H1 (cell line): ENCODE measurements at regions of chr11 and their contacts with region 1.

Region 1: DNA sequence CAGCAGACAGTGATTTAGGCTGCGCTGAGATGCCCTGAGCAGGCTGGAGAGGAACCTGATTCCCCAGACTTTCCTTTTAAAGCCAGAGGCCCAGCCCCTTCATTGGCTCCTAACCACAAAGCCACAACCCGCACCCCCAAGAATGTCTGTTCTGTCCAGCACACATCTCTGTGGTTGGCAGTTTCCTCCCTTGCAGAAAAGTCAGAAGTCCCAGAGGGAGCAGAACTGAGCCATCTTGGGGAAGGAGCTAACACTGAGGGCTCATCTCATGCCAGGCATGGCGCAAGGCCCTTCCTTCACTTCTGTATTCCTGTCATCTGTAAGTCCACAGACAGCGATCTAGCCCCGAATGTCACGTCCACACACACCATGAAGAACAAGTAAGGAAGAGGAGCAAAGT is 97.1 kb upstream of the SYT13 start:
- DNase-seq: no peak
- H3K4me3 ChIP-seq: no peak overlapping the region
- H3K27ac ChIP-seq: no peak overlapping the region
- H3K4me1 ChIP-seq: peaks cover 0 to 2% (median 0%) of the 10 kb centered on the region in 4 experiments; a peak in 2 of 7 replicates
- H3K27me3 ChIP-seq: no peaks in the 10 kb centered on the region; a peak in 1 of 7 replicates
- CTCF ChIP-seq: no peak
- EP300 ChIP-seq: no peak
- POLR2A ChIP-seq: no peak
- RAD21 ChIP-seq: no peak

Region 2: GRCh38 chr11:45252134-45252855 is 130.9 kb before region 1 on chr11:
- CTCF ChIA-PET with region 1: no interaction called
- POLR2A ChIA-PET with region 1: no interaction called
- DNase-seq: peak; percentile 54 to 96
- H3K4me3 ChIP-seq: no peak overlapping the region
- H3K27ac ChIP-seq: no peak overlapping the region
- H3K4me1 ChIP-seq: no peaks in the 10 kb centered on the region; a peak in 1 of 7 replicates
- H3K27me3 ChIP-seq: no peaks in the 10 kb centered on the region
- CTCF ChIP-seq: peak; percentile 90 to 95 (median 92)
- EP300 ChIP-seq: no peak; a peak in 1 of 3 replicates
- POLR2A ChIP-seq: no peak
- RAD21 ChIP-seq: peak; percentile 83 to 86

Region 3: DNA sequence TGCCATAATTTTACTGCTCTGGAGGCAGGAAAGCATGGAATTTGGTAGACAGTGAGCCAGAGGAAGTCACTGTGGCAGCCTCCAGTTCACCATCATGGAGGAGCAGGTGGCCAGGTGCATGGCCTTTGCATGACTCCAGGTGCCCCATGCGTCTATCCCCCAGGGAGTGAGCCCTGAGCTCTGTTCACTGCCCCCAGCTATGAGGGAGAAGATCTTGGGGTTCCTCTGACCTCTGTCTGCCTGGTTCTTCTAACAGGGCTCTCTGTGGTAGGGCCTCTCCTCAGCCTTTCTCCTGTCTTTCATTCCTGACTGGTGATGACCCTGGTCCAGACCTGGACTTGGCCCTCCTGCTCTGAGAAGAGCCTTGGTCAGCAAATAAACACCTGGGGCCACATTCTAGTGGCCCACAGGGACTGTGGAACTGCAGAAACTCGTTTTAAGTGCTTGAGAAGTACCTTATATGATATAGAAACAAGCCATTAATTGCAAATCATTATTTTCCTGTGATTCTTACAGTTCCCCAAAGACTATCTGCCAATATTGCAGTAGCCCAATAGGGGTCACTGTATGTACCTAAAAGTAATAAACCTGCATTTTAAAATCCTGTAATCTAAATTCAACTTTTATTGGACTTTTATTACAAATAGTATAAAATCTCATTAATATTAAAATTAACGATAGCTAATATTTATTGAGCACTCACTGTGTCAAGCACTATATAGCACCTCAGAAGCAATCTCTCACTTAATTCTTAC is 22.9 kb after region 1 on chr11:
- CTCF ChIA-PET with region 1: interaction called, 13 read pairs
- POLR2A ChIA-PET with region 1: no interaction called
- DNase-seq: no peak
- H3K4me3 ChIP-seq: no peak overlapping the region
- H3K27ac ChIP-seq: no peak overlapping the region
- H3K4me1 ChIP-seq: peaks cover 11 to 20% (median 13%) of the 10 kb centered on the region in 4 experiments
- H3K27me3 ChIP-seq: no peaks in the 10 kb centered on the region; a peak in 1 of 7 replicates
- CTCF ChIP-seq: peak in 2 of 3 experiments; percentile 12 to 41; a peak in 2 of 4 replicates
- EP300 ChIP-seq: no peak
- POLR2A ChIP-seq: no peak
- RAD21 ChIP-seq: peak in 1 of 2 experiments; percentile 36; a peak in 3 of 4 replicates